Caco-2 (cell line): ENCODE measurements at regions of chr7 and their contacts with region 1.

Region 1: DNA sequence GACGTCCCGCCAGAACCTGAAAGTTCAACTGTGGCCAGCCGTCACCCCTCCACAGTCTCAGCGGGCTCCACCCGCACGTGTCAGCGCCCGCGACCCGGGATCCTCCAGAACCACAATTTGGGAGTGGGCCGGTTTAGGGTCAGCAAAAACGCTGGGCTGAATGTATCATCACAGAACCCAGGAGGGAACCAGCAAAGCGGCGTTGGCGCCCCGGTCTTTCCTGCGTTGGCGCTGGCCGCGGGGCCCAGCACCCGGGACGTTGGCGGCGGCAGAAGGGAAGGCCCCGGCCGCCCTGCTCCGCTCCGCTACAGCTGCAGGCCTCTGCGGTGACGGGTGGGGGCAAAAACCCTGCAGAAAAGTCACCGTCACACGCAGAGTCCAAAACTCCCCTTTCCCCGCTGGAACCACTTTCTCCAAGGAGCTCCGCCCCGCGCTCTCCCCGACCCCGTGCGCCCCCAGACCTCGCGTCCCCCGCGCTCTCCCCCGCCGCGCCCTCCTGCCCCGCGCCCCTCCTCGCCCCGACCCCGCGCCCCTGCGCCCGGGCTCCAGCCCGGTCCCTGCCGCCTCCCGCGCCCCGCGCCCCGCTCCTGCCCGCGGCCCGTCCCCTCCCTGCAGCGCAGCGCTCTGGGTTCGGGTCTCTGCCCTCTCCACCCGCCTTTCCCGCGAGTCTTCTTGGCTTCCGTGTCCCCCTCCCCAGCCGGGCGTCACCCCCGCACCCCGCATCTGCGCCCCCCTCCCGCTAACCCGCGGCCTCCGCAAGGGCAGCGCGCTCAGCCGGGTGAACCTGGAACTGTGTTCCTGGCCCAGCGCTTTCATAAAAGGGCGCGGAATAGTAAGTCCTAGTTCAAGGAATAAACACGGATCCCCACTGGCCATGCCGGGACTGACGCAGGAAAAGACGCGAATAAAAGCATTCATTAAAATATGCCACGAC is 24.0 kb upstream of the RNF32 start:
- DNase-seq: peak in 1 of 2 experiments; percentile 30
- H3K4me3 ChIP-seq: peak overlapping the region; percentile 45
- H3K4me3 Mint-ChIP-seq: peak overlapping the region; percentile 75
- H3K27ac Mint-ChIP-seq: peak overlapping the region; percentile 79
- H3K4me1 ChIP-seq: peaks cover 74% of the 10 kb centered on the region
- H3K4me1 Mint-ChIP-seq: peaks cover 58% of the 10 kb centered on the region
- H3K27me3 ChIP-seq: no peaks in the 10 kb centered on the region
- H3K27me3 Mint-ChIP-seq: no peaks in the 10 kb centered on the region
- CTCF ChIP-seq: no peak

Region 2: DNA sequence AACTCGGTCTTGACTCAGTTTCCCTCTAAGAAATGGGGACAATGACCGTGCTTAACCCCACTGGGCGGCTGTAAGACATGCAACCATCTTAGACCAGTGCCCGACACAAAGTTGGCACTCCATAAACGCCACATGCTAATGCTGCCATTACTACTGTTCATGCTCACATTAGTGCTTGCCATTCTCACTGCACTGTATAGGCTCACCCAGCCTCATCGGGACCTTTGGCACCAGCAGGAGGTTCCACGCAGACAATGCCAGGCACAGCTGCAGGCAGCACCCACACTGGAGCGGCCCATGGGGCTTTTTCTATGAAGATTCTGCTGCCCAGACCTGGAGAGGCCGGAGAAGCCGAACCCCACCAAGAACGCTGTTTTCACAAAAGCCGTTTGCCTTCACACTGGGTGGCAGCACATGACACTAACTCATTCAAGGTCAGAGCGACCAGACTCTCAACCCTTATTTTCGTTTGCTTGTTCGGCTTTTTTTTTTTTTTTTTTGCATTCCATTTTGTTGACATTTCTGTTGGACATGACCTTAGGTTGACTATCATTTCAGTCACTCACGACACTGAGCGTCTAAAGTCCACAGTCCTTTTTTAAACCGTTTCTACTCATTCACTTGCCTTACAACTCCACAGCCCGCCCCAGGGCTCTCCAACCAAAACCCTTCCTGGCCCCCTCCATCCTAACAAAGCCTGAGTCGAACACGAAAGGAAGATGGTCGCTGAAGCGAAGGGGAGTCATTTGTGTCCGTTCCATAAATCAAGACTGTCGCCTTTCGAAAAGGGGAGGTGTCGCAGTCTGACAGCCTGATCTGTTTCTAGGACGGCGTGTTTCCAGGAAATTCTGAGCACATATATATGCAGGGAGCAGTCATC is 100.4 kb before region 1 on chr7:
- CTCF ChIA-PET with region 1: no interaction called
- POLR2A ChIA-PET with region 1: no interaction called
- intact Hi-C with region 1: loop called (anchors 1 kb)
- DNase-seq: peak; percentile 55 to 70
- H3K4me3 ChIP-seq: peak overlapping the region; percentile 24
- H3K4me3 Mint-ChIP-seq: peak overlapping the region; percentile 71
- H3K27ac Mint-ChIP-seq: peak overlapping the region; percentile 55
- H3K4me1 ChIP-seq: peaks cover 10% of the 10 kb centered on the region
- H3K4me1 Mint-ChIP-seq: peaks cover 22% of the 10 kb centered on the region
- H3K27me3 ChIP-seq: no peaks in the 10 kb centered on the region
- H3K27me3 Mint-ChIP-seq: no peaks in the 10 kb centered on the region
- CTCF ChIP-seq: peak in 1 of 2 experiments; percentile 44

Region 3: DNA sequence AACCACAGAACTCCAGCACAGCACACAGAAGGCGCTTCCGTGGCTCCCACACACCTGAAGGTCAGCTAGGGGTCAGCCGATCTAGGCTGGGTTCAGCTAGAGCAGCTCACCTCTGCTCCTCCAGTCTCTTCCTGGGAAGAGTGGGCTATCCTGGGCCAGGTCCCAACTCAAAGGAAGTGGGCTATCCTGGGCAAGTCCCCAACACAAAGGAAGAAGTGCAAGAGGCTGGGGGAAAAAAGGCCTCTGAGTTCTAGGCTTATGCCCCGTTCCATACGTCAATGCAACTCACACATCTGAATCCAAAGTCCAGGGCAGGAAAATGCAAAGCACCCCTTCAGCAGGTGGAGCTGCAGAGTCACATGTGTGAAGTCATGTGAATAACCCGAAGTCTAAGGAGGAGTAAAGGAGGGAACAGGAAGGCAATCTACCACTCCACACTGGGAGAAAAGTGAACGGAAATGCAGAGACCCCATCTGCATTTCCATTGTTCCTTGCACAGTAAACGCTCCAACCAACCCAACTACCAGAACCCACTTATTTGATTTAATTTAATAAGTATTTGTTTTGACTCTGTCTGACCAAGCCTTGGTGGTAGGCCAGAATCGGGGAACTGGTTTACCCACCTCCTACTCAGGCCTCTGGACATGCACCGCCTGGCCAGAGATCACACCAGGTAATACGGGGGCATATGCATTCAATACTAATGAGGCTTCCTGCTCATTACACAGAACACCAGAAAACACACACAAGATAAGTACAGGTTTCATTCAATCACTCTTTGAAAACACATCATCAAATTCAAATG is 71.4 kb before region 1 on chr7:
- CTCF ChIA-PET with region 1: no interaction called
- POLR2A ChIA-PET with region 1: no interaction called
- intact Hi-C with region 1: loop called (anchors 2 kb)
- DNase-seq: peak; percentile 56 to 60
- H3K4me3 ChIP-seq: no peak overlapping the region
- H3K4me3 Mint-ChIP-seq: no peak overlapping the region
- H3K27ac Mint-ChIP-seq: peak overlapping the region; percentile 13
- H3K4me1 ChIP-seq: peaks cover 14% of the 10 kb centered on the region; the same call in 1 of the 2 replicates
- H3K4me1 Mint-ChIP-seq: peaks cover 13% of the 10 kb centered on the region
- H3K27me3 ChIP-seq: no peaks in the 10 kb centered on the region
- H3K27me3 Mint-ChIP-seq: no peaks in the 10 kb centered on the region
- CTCF ChIP-seq: peak in 1 of 2 experiments; percentile 12

Region 4: GRCh38 chr7:156634117-156634516 is 17.6 kb after region 1 on chr7:
- CTCF ChIA-PET with region 1: interaction called, 5 read pairs
- POLR2A ChIA-PET with region 1: interaction called, 22 read pairs
- intact Hi-C with region 1: loop called (anchors 1 kb)
- DNase-seq: peak in 1 of 2 experiments; percentile 60
- H3K4me3 ChIP-seq: no peak overlapping the region
- H3K4me3 Mint-ChIP-seq: peak overlapping the region; percentile 4
- H3K27ac Mint-ChIP-seq: peak overlapping the region; percentile 69
- H3K4me1 ChIP-seq: peaks cover 30% of the 10 kb centered on the region
- H3K4me1 Mint-ChIP-seq: peaks cover 37% of the 10 kb centered on the region
- H3K27me3 ChIP-seq: no peaks in the 10 kb centered on the region
- H3K27me3 Mint-ChIP-seq: no peaks in the 10 kb centered on the region
- CTCF ChIP-seq: no peak

Region 5: GRCh38 chr7:156668181-156668624 is 51.7 kb after region 1 on chr7:
- CTCF ChIA-PET with region 1: no interaction called
- POLR2A ChIA-PET with region 1: interaction called, 13 read pairs
- intact Hi-C with region 1: loop called (anchors 1 kb)
- DNase-seq: peak; percentile 59 to 78
- H3K4me3 ChIP-seq: no peak overlapping the region
- H3K4me3 Mint-ChIP-seq: peak overlapping the region; percentile 45
- H3K27ac Mint-ChIP-seq: peak overlapping the region; percentile 88
- H3K4me1 ChIP-seq: peaks cover 55% of the 10 kb centered on the region
- H3K4me1 Mint-ChIP-seq: peaks cover 47% of the 10 kb centered on the region
- H3K27me3 ChIP-seq: no peaks in the 10 kb centered on the region
- H3K27me3 Mint-ChIP-seq: no peaks in the 10 kb centered on the region
- CTCF ChIP-seq: no peak

Region 6: DNA sequence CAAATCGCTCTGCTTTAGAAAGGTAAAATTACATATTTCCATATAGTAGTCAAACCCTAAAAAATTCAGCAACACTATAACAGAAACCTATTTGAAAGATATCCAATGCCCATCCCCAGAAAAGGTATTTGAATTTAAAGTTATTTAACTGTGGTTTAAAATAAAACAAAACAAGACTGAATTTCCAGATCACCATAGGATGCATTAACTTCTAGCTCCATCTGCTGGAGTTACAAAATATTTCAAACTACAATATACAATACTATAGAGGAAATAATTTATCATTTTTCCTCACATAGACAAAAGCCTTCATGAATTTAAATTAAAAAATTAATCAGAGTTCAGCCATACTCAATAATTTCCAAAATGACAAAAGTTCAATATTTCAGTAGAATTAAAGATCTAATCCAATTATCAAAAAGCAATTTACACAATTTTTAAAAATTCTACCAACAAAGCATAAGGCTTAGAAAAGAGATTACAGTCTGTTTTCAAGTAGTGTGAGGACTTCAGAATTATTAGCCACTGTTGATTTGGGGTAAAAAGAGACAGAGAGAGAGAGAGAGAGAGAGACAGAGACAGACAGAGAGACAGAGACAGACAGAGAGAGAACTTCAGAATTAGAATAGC is 200.5 kb after region 1 on chr7:
- CTCF ChIA-PET with region 1: no interaction called
- POLR2A ChIA-PET with region 1: no interaction called
- intact Hi-C with region 1: loop called (anchors 1 kb)
- DNase-seq: no peak
- H3K4me3 ChIP-seq: no peak overlapping the region
- H3K4me3 Mint-ChIP-seq: no peak overlapping the region
- H3K27ac Mint-ChIP-seq: no peak overlapping the region
- H3K4me1 ChIP-seq: peaks cover 13% of the 10 kb centered on the region
- H3K4me1 Mint-ChIP-seq: peaks cover 12% of the 10 kb centered on the region
- H3K27me3 ChIP-seq: no peaks in the 10 kb centered on the region
- H3K27me3 Mint-ChIP-seq: no peaks in the 10 kb centered on the region
- CTCF ChIP-seq: peak; percentile 41 to 53